Kidney (tissue), 22 donors: ENCODE measurements at regions of chr13 and their contacts with region 1.

Region 1: DNA sequence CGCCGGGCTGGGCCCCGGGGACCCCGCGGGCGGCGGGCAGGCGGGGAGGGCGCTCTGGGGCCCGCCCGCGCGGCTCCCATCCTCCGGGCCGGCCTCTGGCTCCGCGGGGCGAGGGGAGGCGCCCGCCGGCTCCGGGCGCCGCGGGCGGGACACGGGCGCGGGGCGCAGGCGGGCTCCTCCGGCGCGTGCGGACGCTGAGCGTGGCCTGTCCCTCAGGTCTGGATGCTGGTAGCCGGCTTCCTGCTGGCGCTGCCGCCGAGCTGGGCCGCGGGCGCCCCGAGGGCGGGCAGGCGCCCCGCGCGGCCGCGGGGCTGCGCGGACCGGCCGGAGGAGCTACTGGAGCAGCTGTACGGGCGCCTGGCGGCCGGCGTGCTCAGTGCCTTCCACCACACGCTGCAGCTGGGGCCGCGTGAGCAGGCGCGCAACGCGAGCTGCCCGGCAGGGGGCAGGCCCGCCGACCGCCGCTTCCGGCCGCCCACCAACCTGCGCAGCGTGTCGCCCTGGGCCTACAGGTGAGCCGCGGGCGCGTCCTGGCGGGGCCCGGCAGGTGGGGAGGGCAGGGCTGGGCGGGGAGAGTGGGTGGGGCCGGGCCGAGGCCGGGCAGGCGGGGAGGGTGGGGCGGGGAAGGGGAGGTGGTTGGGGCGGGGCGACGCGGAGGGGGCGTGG is 414 bp downstream of the IL17D start:
- DNase-seq: peak; percentile 88 to 94 (median 92)
- H3K4me3 ChIP-seq: no peak overlapping the region
- H3K27ac ChIP-seq: no peak overlapping the region
- H3K4me1 ChIP-seq: peaks cover 0 to 5% (median 5%) of the 10 kb centered on the region in 3 donors
- H3K27me3 ChIP-seq: no peaks in the 10 kb centered on the region
- CTCF ChIP-seq: peak; percentile 63

Region 2: GRCh38 chr13:20828539-20829364 is 124.8 kb after region 1 on chr13:
- intact Hi-C with region 1: loop called (anchors 10 kb)
- DNase-seq: peak in 3 of 5 donors; percentile 12 to 83 (median 47)
- H3K4me3 ChIP-seq: peak overlapping the region in 2 of 3 donors; percentile 42 to 44
- H3K27ac ChIP-seq: no peak overlapping the region
- H3K4me1 ChIP-seq: no peaks in the 10 kb centered on the region
- H3K27me3 ChIP-seq: no peaks in the 10 kb centered on the region
- CTCF ChIP-seq: peak; percentile 66